Naive thymus-derived CD4-positive, alpha-beta T cell (primary cell): ENCODE measurements at regions of chr9 and their contacts with region 1.

Region 1: GRCh38 chr9:131668439-131669268 is 71.2 kb downstream of the RAPGEF1 start:
- DNase-seq: peak; percentile 24 to 72 (median 49)
- ATAC-seq: peak; percentile 81
- H3K4me3 ChIP-seq: peak overlapping the region; percentile 1
- H3K4me3 Mint-ChIP-seq: peak overlapping the region; percentile 66 to 87 (median 78)
- H3K27ac ChIP-seq: peak overlapping the region; percentile 68
- H3K27ac Mint-ChIP-seq: peak overlapping the region; percentile 86 to 98 (median 94)
- H3K4me1 ChIP-seq: peaks cover 59 to 77% of the 10 kb centered on the region in 2 donors
- H3K4me1 Mint-ChIP-seq: peaks cover 51 to 93% (median 83%) of the 10 kb centered on the region in 7 donors
- H3K27me3 ChIP-seq: no peaks in the 10 kb centered on the region
- H3K27me3 Mint-ChIP-seq: no peaks in the 10 kb centered on the region

Region 2: GRCh38 chr9:131590908-131591844 is 77.5 kb before region 1 on chr9:
- CTCF ChIA-PET with region 1: interaction called, 3 read pairs
- POLR2A ChIA-PET with region 1: interaction called, 3 read pairs
- intact Hi-C with region 1: loop called in 1 of 2 experiments (anchors 2 kb)
- DNase-seq: peak; percentile 50 to 78 (median 68)
- ATAC-seq: peak; percentile 95
- H3K4me3 ChIP-seq: no peak overlapping the region
- H3K4me3 Mint-ChIP-seq: peak overlapping the region in 2 of 10 donors; percentile 13 to 31
- H3K27ac ChIP-seq: no peak overlapping the region
- H3K27ac Mint-ChIP-seq: peak overlapping the region; percentile 18 to 90 (median 60)
- H3K4me1 ChIP-seq: peaks cover 12 to 19% of the 10 kb centered on the region in 2 donors
- H3K4me1 Mint-ChIP-seq: peaks cover 18 to 36% (median 33%) of the 10 kb centered on the region in 7 donors
- H3K27me3 ChIP-seq: no peaks in the 10 kb centered on the region
- H3K27me3 Mint-ChIP-seq: no peaks in the 10 kb centered on the region

Region 3: GRCh38 chr9:131649646-131650045 is 19.0 kb before region 1 on chr9:
- CTCF ChIA-PET with region 1: interaction called, 3 read pairs
- POLR2A ChIA-PET with region 1: interaction called, 3 read pairs
- intact Hi-C with region 1: loop called in 1 of 2 experiments (anchors 2 kb)
- DNase-seq: no peak
- ATAC-seq: no peak
- H3K4me3 ChIP-seq: no peak overlapping the region
- H3K4me3 Mint-ChIP-seq: no peak overlapping the region
- H3K27ac ChIP-seq: no peak overlapping the region
- H3K27ac Mint-ChIP-seq: no peak overlapping the region
- H3K4me1 ChIP-seq: peaks cover 5 to 9% of the 10 kb centered on the region in 2 donors
- H3K4me1 Mint-ChIP-seq: peaks cover 8 to 49% (median 21%) of the 10 kb centered on the region in 7 donors
- H3K27me3 ChIP-seq: no peaks in the 10 kb centered on the region
- H3K27me3 Mint-ChIP-seq: no peaks in the 10 kb centered on the region

Region 4: DNA sequence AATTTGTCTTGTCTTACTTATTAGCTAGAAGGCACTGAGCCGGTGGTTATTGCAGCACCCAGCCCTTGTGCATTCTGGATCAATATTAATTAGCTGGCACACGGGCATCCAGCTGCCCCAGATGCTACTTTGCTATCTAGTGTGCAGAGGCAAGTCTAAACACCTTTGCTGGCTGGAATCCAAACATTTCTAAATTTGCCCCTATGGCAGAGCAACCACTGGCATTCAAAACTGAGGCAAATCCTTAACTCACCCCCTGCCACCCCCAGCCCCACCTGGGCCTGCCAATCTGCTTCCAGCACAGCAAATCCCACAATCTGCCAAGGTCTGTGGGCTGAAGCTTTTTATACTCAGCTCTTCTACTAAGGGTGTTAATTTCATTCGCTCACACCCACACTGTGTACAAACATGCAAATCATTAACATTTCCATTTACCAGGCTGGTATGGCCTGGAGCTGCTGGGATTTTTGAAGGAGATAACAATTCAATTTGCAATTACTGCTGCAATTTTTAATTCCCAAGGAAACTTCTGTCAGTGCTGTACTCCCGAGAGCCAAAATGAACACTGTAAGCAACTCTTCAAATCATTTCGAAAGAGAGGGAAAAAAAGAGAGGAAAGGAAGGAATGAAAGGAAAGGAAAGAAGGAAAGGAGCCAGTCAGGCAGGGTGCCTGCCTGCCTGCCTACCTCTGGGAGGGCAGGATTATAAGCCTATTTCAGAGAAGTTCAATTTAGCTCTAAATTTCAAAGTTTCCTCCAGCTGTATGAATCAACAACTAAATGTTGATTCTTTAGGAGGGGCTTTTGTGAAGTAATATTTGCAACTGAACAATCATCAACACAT is 35.7 kb after region 1 on chr9:
- CTCF ChIA-PET with region 1: no interaction called
- POLR2A ChIA-PET with region 1: no interaction called
- intact Hi-C with region 1: loop called (anchors 5 kb)
- DNase-seq: no peak
- ATAC-seq: no peak
- H3K4me3 ChIP-seq: no peak overlapping the region
- H3K4me3 Mint-ChIP-seq: no peak overlapping the region
- H3K27ac ChIP-seq: no peak overlapping the region
- H3K27ac Mint-ChIP-seq: peak overlapping the region in 4 of 9 donors; percentile 9 to 65 (median 44)
- H3K4me1 ChIP-seq: peaks cover 6 to 39% of the 10 kb centered on the region in 2 donors
- H3K4me1 Mint-ChIP-seq: peaks cover 58 to 88% (median 78%) of the 10 kb centered on the region in 7 donors
- H3K27me3 ChIP-seq: no peaks in the 10 kb centered on the region
- H3K27me3 Mint-ChIP-seq: no peaks in the 10 kb centered on the region

Region 5: GRCh38 chr9:131733541-131734061 is 64.9 kb after region 1 on chr9:
- CTCF ChIA-PET with region 1: interaction called, 3 read pairs
- POLR2A ChIA-PET with region 1: interaction called, 6 read pairs
- intact Hi-C with region 1: loop called (anchors 1 to 2 kb)
- DNase-seq: peak in 2 of 9 donors; percentile 14 to 57
- ATAC-seq: peak; percentile 5
- H3K4me3 ChIP-seq: peak overlapping the region; percentile 46
- H3K4me3 Mint-ChIP-seq: peak overlapping the region; percentile 76 to 89 (median 82)
- H3K27ac ChIP-seq: peak overlapping the region; percentile 73
- H3K27ac Mint-ChIP-seq: peak overlapping the region; percentile 84 to 99 (median 90)
- H3K4me1 ChIP-seq: peaks cover 84 to 85% of the 10 kb centered on the region in 2 donors
- H3K4me1 Mint-ChIP-seq: peaks cover 70 to 93% (median 89%) of the 10 kb centered on the region in 7 donors
- H3K27me3 ChIP-seq: no peaks in the 10 kb centered on the region
- H3K27me3 Mint-ChIP-seq: no peaks in the 10 kb centered on the region

Region 6: GRCh38 chr9:131788341-131788740 is 119.7 kb after region 1 on chr9:
- CTCF ChIA-PET with region 1: no interaction called
- POLR2A ChIA-PET with region 1: no interaction called
- intact Hi-C with region 1: no loop called
- DNase-seq: no peak
- ATAC-seq: no peak
- H3K4me3 ChIP-seq: no peak overlapping the region
- H3K4me3 Mint-ChIP-seq: no peak overlapping the region
- H3K27ac ChIP-seq: no peak overlapping the region
- H3K27ac Mint-ChIP-seq: no peak overlapping the region
- H3K4me1 ChIP-seq: no peaks in the 10 kb centered on the region
- H3K4me1 Mint-ChIP-seq: peaks cover 0 to 3% (median 0%) of the 10 kb centered on the region in 7 donors
- H3K27me3 ChIP-seq: peaks cover 0 to 2% of the 10 kb centered on the region in 2 donors
- H3K27me3 Mint-ChIP-seq: peaks cover 21 to 69% (median 35%) of the 10 kb centered on the region in 5 donors